ENCODE measurements at regions of chr3 and their contacts with region 1.

Region 1: DNA sequence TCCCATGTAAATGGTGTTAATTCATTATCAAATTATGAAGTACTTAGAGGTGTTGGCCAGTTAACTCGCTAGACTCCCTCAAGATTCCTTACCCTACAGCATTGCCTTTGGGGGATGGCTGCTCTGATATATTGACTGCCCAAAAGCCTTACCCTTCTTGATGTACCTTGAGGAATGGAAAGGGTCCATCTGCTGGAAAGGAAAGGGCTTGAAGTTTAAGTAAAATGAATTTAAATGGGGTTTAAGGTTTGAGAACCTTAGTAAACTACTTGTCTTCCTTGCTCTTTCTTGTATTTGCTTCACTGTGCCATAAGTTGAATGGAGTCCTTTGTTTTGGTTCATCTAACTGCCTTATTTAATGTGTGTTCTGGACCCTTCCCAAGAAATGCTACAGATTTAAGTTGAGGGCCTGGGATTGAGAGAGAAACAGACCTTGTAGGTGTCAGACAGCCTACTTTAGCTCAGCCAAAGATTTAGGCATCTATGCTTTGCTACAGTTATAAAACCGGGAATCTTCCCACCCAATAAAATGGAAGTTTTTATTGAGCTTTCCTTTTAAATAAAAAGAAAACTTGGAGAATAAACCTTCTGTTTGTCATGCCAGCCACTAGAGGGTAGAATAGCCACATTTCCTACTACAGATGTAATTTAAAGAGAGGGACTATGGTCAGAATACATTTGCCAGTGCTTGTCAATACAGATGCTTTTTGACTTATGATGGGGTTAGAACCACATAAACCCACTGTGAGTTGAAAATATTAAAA is 25.3 kb downstream of the CMSS1 start:
- DNase-seq: peak in 1 of 2 donors; percentile 32
- ATAC-seq: peak; percentile 49 to 83 (median 74)
- H3K4me3 ChIP-seq: peak overlapping the region in 1 of 10 donors; percentile 3
- H3K27ac ChIP-seq: peak overlapping the region in 8 of 10 donors; percentile 2 to 81 (median 76)
- H3K4me1 ChIP-seq: peaks cover 0 to 60% (median 50%) of the 10 kb centered on the region in 9 donors
- H3K27me3 ChIP-seq: no peaks in the 10 kb centered on the region
- CTCF ChIP-seq: peak; percentile 47 to 83 (median 72)

Region 2: DNA sequence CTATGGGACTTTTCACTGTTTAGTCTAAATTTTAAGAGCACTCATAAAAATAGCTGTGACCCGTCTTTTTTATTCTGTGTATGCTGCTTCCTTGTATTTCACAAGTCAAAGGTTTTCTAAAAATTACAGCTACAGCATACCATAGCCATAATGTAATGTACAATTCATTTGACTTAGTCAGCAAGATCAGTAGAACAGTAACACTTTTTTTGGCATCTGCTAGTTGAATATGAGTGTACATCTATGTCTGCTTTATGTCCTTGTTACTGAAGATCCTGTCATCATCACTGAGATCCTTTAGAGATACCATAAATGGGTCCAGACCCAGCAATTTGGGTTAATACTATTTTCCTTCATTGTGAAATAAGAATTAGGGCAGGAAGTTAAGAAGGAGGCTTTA is 16.8 kb after region 1 on chr3:
- intact Hi-C with region 1: no loop called
- DNase-seq: no peak
- ATAC-seq: peak in 4 of 8 donors; percentile 15 to 76 (median 34)
- H3K4me3 ChIP-seq: no peak overlapping the region
- H3K27ac ChIP-seq: peak overlapping the region in 6 of 10 donors; percentile 3 to 46 (median 29)
- H3K4me1 ChIP-seq: peaks cover 0 to 85% (median 37%) of the 10 kb centered on the region in 9 donors
- H3K27me3 ChIP-seq: no peaks in the 10 kb centered on the region
- CTCF ChIP-seq: no peak

Region 3: GRCh38 chr3:99938270-99938911 is 95.4 kb after region 1 on chr3:
- intact Hi-C with region 1: loop called in 1 of 10 experiments (anchors 5 kb)
- DNase-seq: no peak
- ATAC-seq: peak in 1 of 8 donors; percentile 28
- H3K4me3 ChIP-seq: no peak overlapping the region
- H3K27ac ChIP-seq: peak overlapping the region in 7 of 10 donors; percentile 4 to 70 (median 42)
- H3K4me1 ChIP-seq: peaks cover 0 to 62% (median 42%) of the 10 kb centered on the region in 9 donors
- H3K27me3 ChIP-seq: no peaks in the 10 kb centered on the region
- CTCF ChIP-seq: no peak

Region 4: GRCh38 chr3:100047455-100048141 is 204.6 kb after region 1 on chr3:
- intact Hi-C with region 1: loop called in 2 of 10 experiments (anchors 5 to 10 kb)
- DNase-seq: peak in 1 of 2 donors; percentile 16
- ATAC-seq: peak in 6 of 8 donors; percentile 15 to 47 (median 37)
- H3K4me3 ChIP-seq: peak overlapping the region in 1 of 10 donors; percentile 2
- H3K27ac ChIP-seq: peak overlapping the region in 8 of 10 donors; percentile 42 to 91 (median 79)
- H3K4me1 ChIP-seq: peaks cover 3 to 62% (median 36%) of the 10 kb centered on the region in 9 donors
- H3K27me3 ChIP-seq: no peaks in the 10 kb centered on the region
- CTCF ChIP-seq: no peak

Region 5: GRCh38 chr3:100068826-100069225 is 225.8 kb after region 1 on chr3:
- intact Hi-C with region 1: loop called in 6 of 10 experiments (anchors 5 to 10 kb)
- DNase-seq: peak; percentile 74 to 85
- ATAC-seq: peak; percentile 82 to 92 (median 88)
- H3K4me3 ChIP-seq: no peak overlapping the region
- H3K27ac ChIP-seq: peak overlapping the region in 5 of 10 donors; percentile 30 to 44 (median 38)
- H3K4me1 ChIP-seq: peaks cover 0 to 47% (median 19%) of the 10 kb centered on the region in 9 donors
- H3K27me3 ChIP-seq: no peaks in the 10 kb centered on the region
- CTCF ChIP-seq: peak; percentile 64 to 88 (median 78)

Region 6: DNA sequence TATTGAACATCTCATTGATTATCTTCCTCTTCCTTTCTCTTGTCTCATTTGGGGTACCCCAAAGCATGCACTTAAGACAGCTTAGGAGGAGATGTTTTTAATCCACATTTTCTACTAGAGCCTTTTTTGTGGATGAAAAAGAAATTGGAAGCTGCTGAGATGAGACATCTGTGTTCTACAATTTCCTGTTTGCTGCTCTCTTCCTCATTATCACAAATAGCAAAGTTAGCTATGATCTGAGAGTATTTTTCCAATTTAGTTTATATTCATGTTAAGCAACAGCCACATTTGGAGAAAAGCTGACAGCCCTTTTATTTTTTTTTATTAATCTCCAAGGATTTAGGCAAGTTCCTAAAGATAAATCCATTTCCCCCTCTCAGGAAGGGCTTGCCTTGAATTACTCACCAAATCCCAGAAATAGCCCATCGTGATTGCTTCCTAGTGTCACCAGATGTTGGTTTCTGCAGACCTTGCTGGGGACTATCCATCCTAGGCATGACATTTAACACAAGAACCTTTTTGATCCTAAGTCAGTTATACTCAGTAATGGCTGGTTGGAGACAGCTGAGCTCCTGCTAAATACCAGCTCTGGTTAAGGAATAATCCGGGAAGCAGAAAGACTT is 342.1 kb after region 1 on chr3:
- intact Hi-C with region 1: loop called in 1 of 10 experiments (anchors 10 kb)
- DNase-seq: peak in 1 of 2 donors; percentile 26
- ATAC-seq: peak in 7 of 8 donors; percentile 67 to 86 (median 73)
- H3K4me3 ChIP-seq: no peak overlapping the region
- H3K27ac ChIP-seq: peak overlapping the region in 9 of 10 donors; percentile 3 to 66 (median 49)
- H3K4me1 ChIP-seq: peaks cover 0 to 29% (median 16%) of the 10 kb centered on the region in 9 donors
- H3K27me3 ChIP-seq: no peaks in the 10 kb centered on the region
- CTCF ChIP-seq: no peak

Region 7: GRCh38 chr3:100260685-100261484 is 417.9 kb after region 1 on chr3 and contains the start of gene TBC1D23:
- intact Hi-C with region 1: loop called in 3 of 10 experiments (anchors 5 kb)
- DNase-seq: peak; percentile 98 to 99
- ATAC-seq: peak; percentile 99 to 100 (median 99)
- H3K4me3 ChIP-seq: peak within 1 kb of the TSS; percentile 82 to 99 (median 96)
- H3K27ac ChIP-seq: peak within 1 kb of the TSS; percentile 85 to 99 (median 94)
- H3K4me1 ChIP-seq: peaks cover 0 to 68% (median 55%) of the 10 kb centered on the region in 9 donors
- H3K27me3 ChIP-seq: no peaks in the 10 kb centered on the region
- CTCF ChIP-seq: peak in 2 of 9 donors; percentile 17 to 22
- total RNA-seq, gene TBC1D23: 23.9 to 40.4 (median 29.8) TPM

Measured in heart right ventricle (tissue), 16 donors.